Activated CD4-positive, alpha-beta T cell treated with anti-CD3 and anti-CD28 coated beads for 36 hours (primary cell): ENCODE measurements at regions of chr3 and their contacts with region 1.

Region 1: GRCh38 chr3:12810013-12810780 is 13.7 kb downstream of the CAND2 start:
- DNase-seq: peak; percentile 96
- ATAC-seq: peak; percentile 100
- H3K4me3 Mint-ChIP-seq: peak overlapping the region; percentile 50
- H3K27ac Mint-ChIP-seq: no peak overlapping the region
- H3K4me1 Mint-ChIP-seq: peaks cover 6% of the 10 kb centered on the region
- H3K27me3 Mint-ChIP-seq: no peaks in the 10 kb centered on the region

Region 2: DNA sequence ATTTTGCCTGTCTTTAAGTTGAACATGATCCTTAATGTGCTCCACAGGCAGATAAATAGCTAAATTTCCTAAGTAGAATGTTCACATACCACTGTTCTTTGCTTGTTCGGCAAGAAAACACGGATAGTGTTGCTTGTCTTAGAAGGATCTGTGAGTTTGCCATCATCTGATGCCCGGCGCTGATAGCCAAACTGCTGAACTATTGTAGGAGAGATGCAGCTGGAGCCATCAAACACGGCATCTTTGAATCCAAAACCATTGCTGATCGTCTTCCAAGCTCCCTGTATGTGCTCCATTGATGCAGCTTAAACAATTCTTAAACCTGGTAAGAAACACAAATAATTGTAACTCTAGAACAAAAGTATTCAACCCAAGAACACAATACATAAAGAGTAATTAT is 191.8 kb before region 1 on chr3:
- CTCF ChIA-PET with region 1: no interaction called
- POLR2A ChIA-PET with region 1: no interaction called
- intact Hi-C with region 1: no loop called
- DNase-seq: no peak
- ATAC-seq: no peak
- H3K4me3 Mint-ChIP-seq: no peak overlapping the region
- H3K27ac Mint-ChIP-seq: no peak overlapping the region
- H3K4me1 Mint-ChIP-seq: peaks cover 43% of the 10 kb centered on the region
- H3K27me3 Mint-ChIP-seq: no peaks in the 10 kb centered on the region

Region 3: DNA sequence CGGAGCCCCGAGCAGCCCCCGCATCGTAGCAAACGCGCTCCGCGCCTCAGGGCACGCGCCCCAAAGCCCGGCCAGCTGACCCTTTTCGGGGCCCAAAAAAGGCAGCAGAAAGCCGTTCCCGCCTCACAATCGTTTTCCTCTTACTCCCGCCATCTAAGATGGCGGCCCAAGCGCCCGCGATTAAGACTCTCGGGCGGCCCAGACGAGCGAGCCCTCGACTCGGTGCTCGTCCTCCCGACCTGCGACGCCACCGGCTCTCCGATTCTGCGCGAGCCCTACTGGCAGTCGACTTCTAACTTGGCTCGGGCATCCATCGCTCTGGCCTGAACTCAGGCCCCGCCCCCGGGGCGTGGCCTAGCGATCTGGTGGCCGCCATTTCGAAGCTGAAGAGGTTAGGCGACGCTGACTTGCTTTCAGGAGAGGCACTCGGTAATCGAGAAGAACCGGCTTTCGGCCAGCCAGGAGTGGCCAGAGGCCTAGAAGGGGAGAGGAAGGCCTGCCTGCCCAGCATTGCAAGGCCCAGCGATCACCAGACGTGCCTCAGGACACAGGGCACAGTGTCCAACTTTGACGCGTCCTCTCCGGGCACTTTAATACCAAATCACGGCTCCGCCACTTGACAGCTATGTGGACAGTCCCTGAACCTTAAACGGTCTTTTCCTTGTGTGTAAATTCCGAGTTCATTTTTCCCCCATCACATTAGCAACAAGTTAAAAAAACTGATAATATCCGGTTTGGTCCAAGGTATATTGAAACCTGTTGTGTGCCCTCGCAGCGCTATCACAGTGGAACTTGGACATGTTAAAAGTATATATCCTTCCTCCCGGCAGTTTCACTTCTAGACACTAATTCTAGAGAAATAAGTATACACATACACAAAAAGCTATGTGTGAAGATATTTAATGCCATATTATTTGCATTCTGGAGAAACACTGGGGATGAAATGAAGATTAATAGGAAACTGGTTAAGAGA is 146.0 kb before region 1 on chr3 and contains the start of gene RAF1:
- CTCF ChIA-PET with region 1: interaction called, 3 read pairs
- POLR2A ChIA-PET with region 1: interaction called, 4 read pairs
- intact Hi-C with region 1: loop called in 1 of 2 experiments (anchors 1 kb)
- DNase-seq: peak; percentile 99
- ATAC-seq: peak; percentile 94
- H3K4me3 Mint-ChIP-seq: peak within 1 kb of the TSS; percentile 81
- H3K27ac Mint-ChIP-seq: peak within 1 kb of the TSS; percentile 96
- H3K4me1 Mint-ChIP-seq: peaks cover 25% of the 10 kb centered on the region
- H3K27me3 Mint-ChIP-seq: no peaks in the 10 kb centered on the region
- total RNA-seq, gene RAF1: 66.8 to 74.7 TPM

Region 4: GRCh38 chr3:12782172-12782815 is 27.9 kb before region 1 on chr3:
- CTCF ChIA-PET with region 1: interaction called, 18 read pairs
- POLR2A ChIA-PET with region 1: interaction called, 4 read pairs
- intact Hi-C with region 1: no loop called
- DNase-seq: peak; percentile 37
- ATAC-seq: no peak
- H3K4me3 Mint-ChIP-seq: no peak overlapping the region
- H3K27ac Mint-ChIP-seq: no peak overlapping the region
- H3K4me1 Mint-ChIP-seq: no peaks in the 10 kb centered on the region
- H3K27me3 Mint-ChIP-seq: peaks cover 16% of the 10 kb centered on the region

Region 5: DNA sequence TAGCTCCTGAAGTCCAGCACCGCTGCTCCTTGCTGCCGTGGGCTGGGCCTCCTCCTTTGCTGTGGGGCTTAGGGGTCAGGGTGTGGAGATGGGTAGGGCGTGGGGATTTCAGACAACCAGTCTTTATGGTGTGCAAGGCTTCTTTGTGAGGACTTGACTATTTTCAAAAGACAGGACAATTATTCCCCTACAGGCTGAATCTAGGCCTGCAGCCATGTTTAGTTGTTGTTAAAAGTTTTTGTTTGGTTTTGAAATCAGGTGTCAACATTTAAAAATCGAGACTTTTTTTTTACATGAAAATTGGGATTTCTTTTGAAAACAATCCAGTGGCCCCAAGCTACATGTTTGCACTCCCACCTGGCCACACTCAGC is 20.6 kb after region 1 on chr3:
- CTCF ChIA-PET with region 1: interaction called, 5 read pairs
- POLR2A ChIA-PET with region 1: interaction called, 24 read pairs
- intact Hi-C with region 1: no loop called
- DNase-seq: no peak
- ATAC-seq: no peak
- H3K4me3 Mint-ChIP-seq: no peak overlapping the region
- H3K27ac Mint-ChIP-seq: no peak overlapping the region
- H3K4me1 Mint-ChIP-seq: no peaks in the 10 kb centered on the region
- H3K27me3 Mint-ChIP-seq: no peaks in the 10 kb centered on the region

Region 6: DNA sequence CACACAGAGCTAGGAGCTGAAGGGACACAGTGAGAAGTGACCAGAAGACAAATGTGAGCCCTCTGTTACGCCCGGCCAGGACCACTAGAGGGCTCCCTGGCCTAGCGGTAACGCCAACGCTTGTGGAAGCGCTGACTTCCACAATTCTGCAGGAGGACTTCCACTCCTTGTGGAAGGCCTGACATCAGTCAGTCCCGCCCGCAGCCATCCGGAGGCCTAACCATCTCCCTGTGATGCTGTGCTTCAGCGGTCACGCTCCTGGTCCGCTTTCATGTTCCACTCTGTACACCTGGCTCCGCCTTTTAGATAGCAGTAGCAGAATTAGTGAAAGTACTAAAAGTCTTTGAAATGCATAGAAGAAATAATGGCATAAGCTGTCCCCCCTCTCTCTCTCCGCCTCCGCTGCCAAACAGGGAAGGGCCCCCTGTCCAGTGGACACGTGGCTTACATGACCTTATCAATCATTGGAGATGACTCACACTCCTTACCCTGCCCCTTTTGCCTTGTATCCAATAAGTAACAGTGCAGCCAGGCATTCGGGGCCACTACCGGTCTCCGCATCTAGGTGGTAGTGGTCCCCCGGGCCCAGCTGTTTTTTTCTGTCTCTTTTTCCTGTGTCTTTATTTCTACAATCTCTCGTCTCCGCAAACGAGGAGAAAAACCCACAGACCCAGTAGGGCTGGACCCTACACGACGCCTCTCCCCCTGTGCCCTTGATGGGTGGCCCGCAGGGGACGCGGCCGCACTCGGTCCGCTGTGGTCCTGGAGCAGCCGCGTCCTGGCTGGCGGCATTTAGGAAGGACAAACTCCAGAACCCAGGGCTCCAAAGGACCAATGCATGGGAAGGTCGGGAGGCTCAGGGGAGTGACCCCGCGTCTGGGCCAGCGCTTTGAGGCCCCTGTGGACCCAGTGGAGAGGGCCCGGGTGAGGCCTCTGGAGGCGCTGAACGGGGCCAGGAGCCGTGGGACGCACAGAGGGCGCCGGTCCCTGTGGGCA is 58.1 kb after region 1 on chr3:
- CTCF ChIA-PET with region 1: interaction called, 5 read pairs
- POLR2A ChIA-PET with region 1: interaction called, 3 read pairs
- intact Hi-C with region 1: loop called in 1 of 2 experiments (anchors 1 kb)
- DNase-seq: peak; percentile 79
- ATAC-seq: peak; percentile 88
- H3K4me3 Mint-ChIP-seq: peak overlapping the region; percentile 72
- H3K27ac Mint-ChIP-seq: peak overlapping the region; percentile 71
- H3K4me1 Mint-ChIP-seq: peaks cover 9% of the 10 kb centered on the region
- H3K27me3 Mint-ChIP-seq: peaks cover 8% of the 10 kb centered on the region

Region 7: GRCh38 chr3:12922306-12922705 is 112.1 kb after region 1 on chr3:
- CTCF ChIA-PET with region 1: no interaction called
- POLR2A ChIA-PET with region 1: no interaction called
- intact Hi-C with region 1: no loop called
- DNase-seq: no peak
- ATAC-seq: no peak
- H3K4me3 Mint-ChIP-seq: no peak overlapping the region
- H3K27ac Mint-ChIP-seq: no peak overlapping the region
- H3K4me1 Mint-ChIP-seq: peaks cover 3% of the 10 kb centered on the region
- H3K27me3 Mint-ChIP-seq: no peaks in the 10 kb centered on the region

Region 8: DNA sequence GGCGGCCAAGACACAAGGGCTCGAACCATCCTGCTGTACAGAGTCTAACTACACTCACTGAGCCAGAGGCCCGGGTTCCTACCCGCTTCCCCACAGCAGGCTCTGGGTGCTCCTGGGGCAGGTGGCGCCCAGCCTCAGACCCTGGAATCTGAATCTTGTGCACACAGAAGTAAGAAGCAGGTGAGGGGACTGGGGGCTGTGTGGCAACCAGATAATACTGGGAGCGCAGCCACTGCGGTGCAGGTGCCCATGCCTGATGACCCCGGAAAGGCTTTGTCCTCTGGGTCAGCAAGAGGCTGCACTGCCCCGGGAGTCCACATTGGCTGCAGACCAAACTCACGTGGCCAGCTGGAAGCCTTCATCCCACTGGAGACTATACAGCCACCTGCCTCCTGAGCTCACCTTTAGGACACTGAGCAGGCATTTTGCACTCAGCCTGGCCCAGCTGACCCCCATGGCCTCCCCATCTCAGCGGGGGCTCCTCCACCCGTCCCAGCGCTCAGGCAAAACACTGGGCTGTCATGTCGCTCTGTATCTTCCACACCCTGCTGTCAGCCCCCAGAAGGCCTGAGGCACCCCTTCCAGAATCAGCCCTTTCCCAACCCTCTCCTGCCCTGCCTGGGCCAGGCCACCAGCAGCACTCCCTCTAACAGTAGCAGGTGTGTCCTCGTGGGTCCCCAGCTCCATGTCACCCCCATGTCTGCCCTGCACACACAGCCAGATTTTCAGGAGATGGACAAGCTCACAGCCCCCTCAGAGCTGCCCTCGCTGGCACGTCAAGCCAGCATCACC is 364.0 kb after region 1 on chr3:
- CTCF ChIA-PET with region 1: no interaction called
- POLR2A ChIA-PET with region 1: no interaction called
- intact Hi-C with region 1: no loop called
- DNase-seq: no peak
- ATAC-seq: no peak
- H3K4me3 Mint-ChIP-seq: no peak overlapping the region
- H3K27ac Mint-ChIP-seq: no peak overlapping the region
- H3K4me1 Mint-ChIP-seq: no peaks in the 10 kb centered on the region
- H3K27me3 Mint-ChIP-seq: no peaks in the 10 kb centered on the region